ENCODE measurements at regions of chr6 and their contacts with region 1.

Region 1: DNA sequence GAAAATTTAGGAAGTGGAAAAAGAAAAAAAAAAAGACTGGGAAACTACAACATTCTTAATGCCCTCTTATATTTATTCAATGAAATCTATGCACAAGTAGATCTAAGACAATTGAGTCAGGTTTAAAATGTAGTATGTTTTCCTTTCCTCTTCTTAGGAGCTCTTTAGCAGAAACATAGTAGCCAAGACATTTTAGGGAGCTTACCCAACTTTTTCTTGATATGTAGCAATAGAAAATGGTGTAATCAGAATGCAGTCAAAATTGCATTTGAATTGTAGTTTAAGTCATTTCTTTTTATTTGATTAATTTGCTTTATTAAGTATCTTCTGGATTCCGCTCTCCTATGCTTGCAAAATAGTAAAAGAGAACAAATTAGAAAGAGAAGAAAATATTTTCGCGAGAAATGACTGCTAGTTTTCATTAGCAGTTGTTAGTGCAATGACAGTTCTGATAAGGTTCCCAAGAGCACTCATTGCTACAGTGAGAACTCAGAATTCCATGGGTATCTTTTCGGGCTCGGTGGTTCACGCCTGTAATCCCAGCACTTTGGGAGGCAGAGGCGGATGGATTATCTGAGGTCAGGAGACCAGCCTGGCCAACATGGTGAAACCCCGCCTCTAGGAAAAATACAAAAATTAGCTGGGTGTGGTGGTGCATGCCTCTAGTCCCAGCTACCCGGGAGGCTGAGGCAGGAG is 52.2 kb downstream of the JARID2 start:
- DNase-seq: no peak
- H3K4me3 ChIP-seq: no peak overlapping the region
- H3K27me3 ChIP-seq: no peaks in the 10 kb centered on the region
- CTCF ChIP-seq: no peak

Region 2: DNA sequence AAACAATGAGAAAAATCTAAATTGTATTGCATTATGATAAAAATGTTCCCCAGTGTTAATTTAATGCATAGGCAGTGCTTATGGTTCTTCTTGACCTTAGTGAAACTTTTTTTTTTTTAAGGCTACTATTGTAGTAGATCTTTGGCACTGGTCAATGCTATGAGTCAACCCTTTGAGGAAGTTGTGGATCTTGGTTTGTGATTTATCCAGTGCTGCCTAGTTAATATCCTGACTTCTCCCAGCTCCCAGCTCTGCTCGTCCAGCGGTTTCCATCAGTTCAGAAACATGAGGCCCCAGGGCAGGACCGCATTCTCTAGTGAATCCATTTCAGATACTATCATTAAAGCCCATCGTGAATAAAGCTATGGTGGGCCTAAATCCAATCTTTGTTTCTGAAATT is 416.6 kb before region 1 on chr6:
- CTCF ChIA-PET with region 1: no interaction called
- POLR2A ChIA-PET with region 1: interaction called, 10 read pairs
- DNase-seq: no peak
- H3K4me3 ChIP-seq: no peak overlapping the region
- H3K27me3 ChIP-seq: no peaks in the 10 kb centered on the region
- CTCF ChIP-seq: no peak

Measured in BJ (cell line).